GM12878 (cell line): ENCODE measurements at regions of chr6 and their contacts with region 1.

Region 1: GRCh38 chr6:4883298-4883697 is 107.1 kb downstream of the CDYL start:
- DNase-seq: no peak
- ATAC-seq: no peak
- H3K4me3 ChIP-seq: no peak overlapping the region
- H3K27ac ChIP-seq: no peak overlapping the region
- H3K4me1 ChIP-seq: peaks cover 43% of the 10 kb centered on the region
- H3K27me3 ChIP-seq: no peaks in the 10 kb centered on the region
- CTCF ChIP-seq: no peak
- EP300 ChIP-seq: no peak
- POLR2A ChIP-seq: no peak
- RAD21 ChIP-seq: no peak

Region 2: GRCh38 chr6:4788953-4789584 is 94.2 kb before region 1 on chr6:
- CTCF ChIA-PET with region 1: interaction called, 3 read pairs
- POLR2A ChIA-PET with region 1: no interaction called
- RAD21 ChIA-PET with region 1: interaction called, 4 read pairs
- SMC1A ChIA-PET with region 1: interaction called, 11 read pairs
- in situ Hi-C with region 1: no loop called
- intact Hi-C with region 1: no loop called
- DNase-seq: no peak
- ATAC-seq: peak; percentile 97
- H3K4me3 ChIP-seq: peak overlapping the region; percentile 53; the same call in 1 of the 2 replicates
- H3K27ac ChIP-seq: peak overlapping the region; percentile 42
- H3K4me1 ChIP-seq: peaks cover 27% of the 10 kb centered on the region
- H3K27me3 ChIP-seq: no peaks in the 10 kb centered on the region
- CTCF ChIP-seq: peak; percentile 39 to 69 (median 43)
- EP300 ChIP-seq: no peak
- POLR2A ChIP-seq: no peak
- RAD21 ChIP-seq: peak; percentile 21; the same call in 1 of the 2 replicates

Region 3: GRCh38 chr6:4805553-4806336 is 77.6 kb before region 1 on chr6:
- CTCF ChIA-PET with region 1: no interaction called
- POLR2A ChIA-PET with region 1: interaction called, 10 read pairs
- RAD21 ChIA-PET with region 1: interaction called, 17 read pairs
- SMC1A ChIA-PET with region 1: interaction called, 10 read pairs
- in situ Hi-C with region 1: no loop called
- intact Hi-C with region 1: no loop called
- DNase-seq: no peak
- ATAC-seq: no peak
- H3K4me3 ChIP-seq: no peak overlapping the region
- H3K27ac ChIP-seq: no peak overlapping the region
- H3K4me1 ChIP-seq: peaks cover 46% of the 10 kb centered on the region
- H3K27me3 ChIP-seq: no peaks in the 10 kb centered on the region
- CTCF ChIP-seq: peak; percentile 48 to 70 (median 57); a peak in 5 of 6 replicates
- EP300 ChIP-seq: no peak
- POLR2A ChIP-seq: no peak
- RAD21 ChIP-seq: peak; percentile 48; the same call in 1 of the 2 replicates

Region 4: GRCh38 chr6:4848382-4849068 is 34.8 kb before region 1 on chr6:
- CTCF ChIA-PET with region 1: interaction called, 7 read pairs
- POLR2A ChIA-PET with region 1: interaction called, 4 read pairs
- RAD21 ChIA-PET with region 1: interaction called, 4 read pairs
- SMC1A ChIA-PET with region 1: interaction called, 12 read pairs
- in situ Hi-C with region 1: no loop called
- intact Hi-C with region 1: no loop called
- DNase-seq: no peak
- ATAC-seq: peak; percentile 87
- H3K4me3 ChIP-seq: no peak overlapping the region
- H3K27ac ChIP-seq: no peak overlapping the region
- H3K4me1 ChIP-seq: no peaks in the 10 kb centered on the region
- H3K27me3 ChIP-seq: no peaks in the 10 kb centered on the region
- CTCF ChIP-seq: peak; percentile 38 to 60 (median 47); a peak in 5 of 6 replicates
- EP300 ChIP-seq: no peak
- POLR2A ChIP-seq: no peak
- RAD21 ChIP-seq: peak; percentile 65

Region 5: DNA sequence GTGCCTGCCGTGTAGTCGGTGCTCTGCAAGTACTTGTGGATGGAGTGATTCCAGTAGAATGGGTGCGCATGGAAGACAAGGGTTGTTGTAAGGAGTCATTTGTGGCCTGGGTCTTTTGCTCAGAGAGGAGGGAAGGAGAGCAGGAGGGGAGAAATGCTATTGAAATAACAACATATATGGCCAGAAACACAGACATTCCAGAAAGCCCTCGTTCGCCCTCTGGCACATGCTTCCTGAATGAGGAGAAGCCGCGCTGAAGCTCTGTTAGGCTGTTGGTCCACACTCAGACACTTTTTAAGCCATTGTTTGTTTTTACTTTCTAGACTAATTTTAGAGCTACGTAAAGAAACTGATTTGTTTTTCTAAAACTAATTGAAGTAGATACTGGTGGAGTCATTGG is 13.1 kb after region 1 on chr6:
- CTCF ChIA-PET with region 1: interaction called, 4 read pairs
- POLR2A ChIA-PET with region 1: interaction called, 7 read pairs
- RAD21 ChIA-PET with region 1: interaction called, 3 read pairs
- SMC1A ChIA-PET with region 1: interaction called, 20 read pairs
- in situ Hi-C with region 1: no loop called
- intact Hi-C with region 1: loop called (anchors 2 kb)
- DNase-seq: no peak
- ATAC-seq: no peak
- H3K4me3 ChIP-seq: no peak overlapping the region
- H3K27ac ChIP-seq: no peak overlapping the region
- H3K4me1 ChIP-seq: peaks cover 7% of the 10 kb centered on the region
- H3K27me3 ChIP-seq: no peaks in the 10 kb centered on the region
- CTCF ChIP-seq: no peak
- EP300 ChIP-seq: no peak
- POLR2A ChIP-seq: no peak
- RAD21 ChIP-seq: no peak

Region 6: DNA sequence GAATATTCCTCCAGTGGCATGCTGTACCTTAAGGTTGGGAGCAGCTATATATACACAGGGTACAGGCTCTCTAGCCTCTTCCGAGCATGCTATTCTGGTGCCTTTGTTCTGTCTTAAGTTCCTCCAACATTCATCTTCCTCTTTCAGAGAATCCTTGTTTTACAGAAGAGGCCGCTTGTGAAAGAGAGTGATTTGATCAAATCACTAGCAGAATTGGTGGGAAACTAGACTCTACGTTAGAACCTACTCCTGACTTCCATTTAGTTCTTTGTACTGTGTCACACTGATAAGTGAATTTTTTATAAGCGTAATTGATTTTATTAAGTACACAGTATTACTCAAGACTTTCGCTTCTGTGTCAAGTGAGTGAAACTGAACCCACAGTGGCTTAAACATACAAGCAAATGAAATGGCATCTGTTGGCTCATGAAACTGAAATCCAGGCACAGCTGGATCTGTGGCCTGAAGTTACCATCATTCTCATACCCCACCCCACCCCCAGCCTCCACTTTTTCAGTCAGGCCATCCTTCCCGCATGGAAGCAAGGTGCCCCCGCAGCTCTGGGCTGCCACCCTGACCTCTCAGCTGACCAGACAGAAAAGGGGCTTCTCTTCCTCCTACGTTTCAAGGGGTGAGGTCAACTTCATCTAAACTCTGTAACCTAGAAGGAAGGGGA is 18.2 kb after region 1 on chr6:
- CTCF ChIA-PET with region 1: interaction called, 4 read pairs
- POLR2A ChIA-PET with region 1: interaction called, 7 read pairs
- RAD21 ChIA-PET with region 1: interaction called, 11 read pairs
- SMC1A ChIA-PET with region 1: interaction called, 21 read pairs
- in situ Hi-C with region 1: no loop called
- intact Hi-C with region 1: loop called (anchors 2 kb)
- DNase-seq: peak; percentile 67
- ATAC-seq: peak; percentile 93
- H3K4me3 ChIP-seq: peak overlapping the region; percentile 18; the same call in 1 of the 2 replicates
- H3K27ac ChIP-seq: peak overlapping the region; percentile 76
- H3K4me1 ChIP-seq: peaks cover 37% of the 10 kb centered on the region
- H3K27me3 ChIP-seq: no peaks in the 10 kb centered on the region
- CTCF ChIP-seq: no peak
- EP300 ChIP-seq: peak; percentile 64 to 75; a peak in 3 of 4 replicates
- POLR2A ChIP-seq: no peak
- RAD21 ChIP-seq: no peak

Region 7: DNA sequence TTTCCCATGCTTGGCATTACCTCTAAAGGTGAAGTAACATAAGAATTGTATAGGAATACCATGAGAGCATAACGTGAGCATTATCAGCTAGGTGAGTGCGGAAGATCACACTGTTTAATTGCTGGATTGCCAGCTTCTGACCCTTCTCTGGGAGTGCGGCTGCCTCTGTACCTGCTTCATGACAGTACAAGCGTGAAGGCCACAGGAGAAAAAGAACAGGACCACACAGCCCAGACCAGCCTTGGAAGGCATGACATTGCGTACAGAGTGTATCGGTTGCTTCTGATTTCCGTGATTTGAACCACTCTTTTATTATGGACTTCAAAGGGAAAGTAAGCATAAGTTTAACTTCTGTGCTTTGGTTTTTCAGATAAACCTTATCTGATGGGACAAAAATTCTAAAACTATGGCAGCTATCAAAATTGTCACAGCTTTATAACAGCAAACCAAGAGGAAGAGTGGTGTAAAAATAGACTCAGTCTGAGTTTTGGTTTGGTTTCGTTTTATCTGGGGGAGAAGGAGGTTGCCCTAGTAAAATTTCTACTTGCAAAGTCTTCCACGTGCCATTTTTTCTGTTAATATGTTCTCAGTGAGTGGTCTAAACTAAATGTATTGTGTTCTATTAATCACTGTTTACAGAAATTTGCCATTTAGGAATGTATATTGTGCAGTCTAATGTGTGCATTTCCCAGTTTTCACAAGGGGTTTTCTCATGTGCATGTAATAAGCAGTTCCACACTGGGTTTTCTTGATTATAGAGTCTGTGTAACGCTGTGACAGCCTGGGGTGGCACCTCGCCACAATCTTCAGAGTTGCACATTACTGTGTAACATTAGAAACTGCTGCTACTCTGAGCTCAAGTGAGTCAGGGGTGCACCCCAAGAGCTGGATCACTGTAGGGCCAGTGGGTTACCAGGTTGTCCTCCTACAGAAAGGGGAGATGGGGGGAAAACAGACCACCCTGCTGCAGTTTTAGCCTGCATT is 23.3 kb after region 1 on chr6:
- CTCF ChIA-PET with region 1: interaction called, 4 read pairs
- POLR2A ChIA-PET with region 1: interaction called, 7 read pairs
- RAD21 ChIA-PET with region 1: interaction called, 11 read pairs
- SMC1A ChIA-PET with region 1: interaction called, 21 read pairs
- in situ Hi-C with region 1: no loop called
- intact Hi-C with region 1: loop called (anchors 2 kb)
- DNase-seq: no peak
- ATAC-seq: peak; percentile 79
- H3K4me3 ChIP-seq: peak overlapping the region; percentile 32; the same call in 1 of the 2 replicates
- H3K27ac ChIP-seq: peak overlapping the region; percentile 82
- H3K4me1 ChIP-seq: peaks cover 51% of the 10 kb centered on the region
- H3K27me3 ChIP-seq: no peaks in the 10 kb centered on the region
- CTCF ChIP-seq: no peak
- EP300 ChIP-seq: no peak
- POLR2A ChIP-seq: 0 out of 2 replicates have a peak, but pooled peaks have one; percentile 21
- RAD21 ChIP-seq: no peak